ENCODE measurements at regions of chr10 and their contacts with region 1.

Region 1: DNA sequence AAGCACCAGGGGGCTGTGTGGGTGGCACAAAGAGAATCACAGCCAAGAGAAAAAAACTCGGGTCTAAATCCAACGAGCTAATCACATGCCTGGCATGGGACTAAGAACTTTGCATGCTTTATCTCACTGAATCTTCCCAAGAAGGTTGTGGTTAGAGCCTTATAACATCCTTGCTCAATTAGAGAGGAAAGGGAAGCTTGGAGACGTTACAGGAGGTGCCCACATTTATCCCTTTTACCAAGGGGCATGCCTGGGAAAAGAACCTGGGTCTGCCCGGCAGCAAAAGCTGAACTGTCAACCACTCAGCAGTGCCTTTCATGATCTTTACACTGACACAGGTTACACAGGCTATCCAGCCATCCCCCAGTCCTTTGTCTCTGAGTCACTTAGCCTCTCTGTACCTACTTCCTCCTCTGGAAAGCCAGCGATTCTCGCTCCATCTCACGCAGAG is 190.1 kb downstream of the PRPF18 start:
- DNase-seq: no peak
- ATAC-seq: peak; percentile 69
- H3K4me3 ChIP-seq: no peak overlapping the region
- H3K27ac ChIP-seq: peak overlapping the region; percentile 36
- H3K4me1 ChIP-seq: peaks cover 14% of the 10 kb centered on the region
- H3K27me3 ChIP-seq: no peaks in the 10 kb centered on the region
- CTCF ChIP-seq: no peak
- EP300 ChIP-seq: no peak
- POLR2A ChIP-seq: no peak
- RAD21 ChIP-seq: no peak

Region 2: DNA sequence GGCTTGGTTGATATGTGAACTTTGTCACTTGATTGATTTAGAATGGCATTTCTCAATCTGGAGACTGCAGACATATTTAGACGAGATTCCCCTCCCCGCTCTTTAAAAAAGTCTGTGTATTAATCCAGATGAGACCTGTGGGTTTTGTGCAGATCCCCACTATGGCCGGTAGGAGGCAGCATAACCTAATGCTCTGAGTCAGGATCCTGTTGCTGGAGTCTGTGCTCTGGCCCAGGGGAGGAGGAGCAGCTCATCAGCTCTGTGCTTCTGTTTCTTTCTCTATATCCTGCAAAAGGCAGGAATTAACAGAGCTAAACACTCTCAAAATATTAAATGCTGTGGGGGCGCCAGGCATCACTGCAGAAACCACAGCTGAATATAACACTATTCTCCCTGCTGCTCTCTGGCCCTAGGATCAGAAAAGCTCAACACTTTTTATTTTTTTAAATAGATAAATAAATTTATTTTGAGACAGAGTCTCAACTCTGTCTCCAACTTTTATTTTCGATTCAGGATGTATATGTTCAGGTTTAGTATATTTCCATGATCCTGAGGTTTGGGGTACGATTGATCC is 404.9 kb before region 1 on chr10:
- CTCF ChIA-PET with region 1: interaction called, 4 read pairs
- POLR2A ChIA-PET with region 1: interaction called, 4 read pairs
- RAD21 ChIA-PET with region 1: no interaction called
- SMC1A ChIA-PET with region 1: no interaction called
- in situ Hi-C with region 1: loop called (anchors 10 kb)
- intact Hi-C with region 1: loop called (anchors 5 kb)
- DNase-seq: no peak
- ATAC-seq: peak; percentile 99
- H3K4me3 ChIP-seq: no peak overlapping the region
- H3K27ac ChIP-seq: no peak overlapping the region
- H3K4me1 ChIP-seq: no peaks in the 10 kb centered on the region
- H3K27me3 ChIP-seq: no peaks in the 10 kb centered on the region
- CTCF ChIP-seq: peak; percentile 90 to 99 (median 95)
- EP300 ChIP-seq: no peak
- POLR2A ChIP-seq: no peak
- RAD21 ChIP-seq: peak; percentile 97

Region 3: DNA sequence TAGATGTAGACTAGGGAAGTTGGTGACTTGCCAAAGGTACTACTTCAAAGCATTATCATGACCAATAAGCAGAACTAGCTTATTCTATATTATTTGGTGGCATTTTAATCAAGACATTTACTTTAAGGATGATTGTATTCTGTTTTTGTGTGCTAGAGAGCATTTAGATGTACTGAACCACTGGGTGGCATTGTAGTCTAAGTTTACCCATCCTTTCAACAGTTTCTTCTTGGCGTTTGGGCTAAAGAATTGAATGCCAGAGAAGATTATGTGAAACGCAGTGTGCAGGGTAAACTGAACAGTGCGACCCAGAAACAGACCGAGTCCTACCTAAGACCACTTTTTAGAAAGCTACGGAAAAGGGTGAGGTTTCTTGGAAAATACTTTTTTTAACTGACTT is 163.4 kb before region 1 on chr10:
- CTCF ChIA-PET with region 1: interaction called, 5 read pairs
- POLR2A ChIA-PET with region 1: no interaction called
- RAD21 ChIA-PET with region 1: no interaction called
- SMC1A ChIA-PET with region 1: interaction called, 4 read pairs
- in situ Hi-C with region 1: no loop called
- intact Hi-C with region 1: loop called (anchors 1 kb)
- DNase-seq: no peak
- ATAC-seq: peak; percentile 33; the same call in 2 of the 3 replicates
- H3K4me3 ChIP-seq: no peak overlapping the region
- H3K27ac ChIP-seq: no peak overlapping the region
- H3K4me1 ChIP-seq: no peaks in the 10 kb centered on the region
- H3K27me3 ChIP-seq: no peaks in the 10 kb centered on the region
- CTCF ChIP-seq: peak; percentile 7 to 25 (median 23); a peak in 2 of 6 replicates
- EP300 ChIP-seq: no peak
- POLR2A ChIP-seq: no peak
- RAD21 ChIP-seq: peak; percentile 42

Region 4: GRCh38 chr10:13669182-13669865 is 107.6 kb before region 1 on chr10:
- CTCF ChIA-PET with region 1: no interaction called
- POLR2A ChIA-PET with region 1: no interaction called
- RAD21 ChIA-PET with region 1: interaction called, 4 read pairs
- SMC1A ChIA-PET with region 1: no interaction called
- in situ Hi-C with region 1: loop called (anchors 5 kb)
- intact Hi-C with region 1: no loop called
- DNase-seq: no peak
- ATAC-seq: no peak
- H3K4me3 ChIP-seq: no peak overlapping the region
- H3K27ac ChIP-seq: no peak overlapping the region
- H3K4me1 ChIP-seq: no peaks in the 10 kb centered on the region
- H3K27me3 ChIP-seq: no peaks in the 10 kb centered on the region
- CTCF ChIP-seq: no peak
- EP300 ChIP-seq: no peak
- POLR2A ChIP-seq: no peak
- RAD21 ChIP-seq: no peak

Region 5: GRCh38 chr10:13712837-13713581 is 63.9 kb before region 1 on chr10:
- CTCF ChIA-PET with region 1: interaction called, 6 read pairs
- POLR2A ChIA-PET with region 1: interaction called, 3 read pairs
- RAD21 ChIA-PET with region 1: interaction called, 24 read pairs
- SMC1A ChIA-PET with region 1: interaction called, 25 read pairs
- in situ Hi-C with region 1: no loop called
- intact Hi-C with region 1: loop called (anchors 5 kb)
- DNase-seq: peak; percentile 82
- ATAC-seq: peak; percentile 91
- H3K4me3 ChIP-seq: peak overlapping the region; percentile 17; the same call in 1 of the 2 replicates
- H3K27ac ChIP-seq: peak overlapping the region; percentile 97
- H3K4me1 ChIP-seq: peaks cover 41% of the 10 kb centered on the region
- H3K27me3 ChIP-seq: no peaks in the 10 kb centered on the region
- CTCF ChIP-seq: no peak
- EP300 ChIP-seq: peak; percentile 18 to 43; a peak in 2 of 4 replicates
- POLR2A ChIP-seq: peak; percentile 59; the same call in 1 of the 2 replicates
- RAD21 ChIP-seq: no peak

Region 6: DNA sequence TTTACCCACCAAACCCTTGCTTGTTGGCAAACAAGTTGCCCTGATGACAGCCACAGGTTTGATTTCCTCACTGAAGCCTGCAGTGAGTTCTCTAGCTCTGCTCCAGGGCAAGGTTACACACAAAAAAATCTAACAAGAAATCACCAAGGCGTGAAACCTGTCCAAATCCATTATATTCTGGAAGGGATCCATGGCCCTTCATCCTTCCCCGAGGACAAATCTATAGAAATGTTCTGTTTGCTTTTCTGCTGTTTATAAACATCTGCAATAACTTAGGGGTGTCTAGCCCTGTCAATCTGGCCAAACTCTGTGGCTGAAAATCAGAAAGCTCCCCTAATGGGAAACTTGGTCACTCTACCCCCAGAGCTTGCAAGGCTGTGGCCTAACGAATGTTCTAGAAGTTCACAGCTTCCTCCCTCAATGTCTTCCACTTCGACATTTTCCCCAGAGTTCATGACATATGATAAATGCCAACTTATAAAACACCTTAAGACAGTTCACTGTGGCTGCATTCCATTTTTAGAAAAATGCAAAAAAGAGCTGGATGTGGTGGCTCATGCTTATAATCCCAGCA is 25.6 kb before region 1 on chr10:
- CTCF ChIA-PET with region 1: interaction called, 4 read pairs
- POLR2A ChIA-PET with region 1: interaction called, 11 read pairs
- RAD21 ChIA-PET with region 1: interaction called, 18 read pairs
- SMC1A ChIA-PET with region 1: interaction called, 189 read pairs
- in situ Hi-C with region 1: no loop called
- intact Hi-C with region 1: no loop called
- DNase-seq: peak; percentile 60
- ATAC-seq: peak; percentile 69
- H3K4me3 ChIP-seq: no peak overlapping the region
- H3K27ac ChIP-seq: peak overlapping the region; percentile 78
- H3K4me1 ChIP-seq: peaks cover 73% of the 10 kb centered on the region
- H3K27me3 ChIP-seq: no peaks in the 10 kb centered on the region
- CTCF ChIP-seq: no peak
- EP300 ChIP-seq: peak in 1 of 2 experiments; percentile 64; a peak in 2 of 4 replicates
- POLR2A ChIP-seq: no peak
- RAD21 ChIP-seq: no peak

Region 7: GRCh38 chr10:13787015-13787421 is 10.1 kb after region 1 on chr10:
- CTCF ChIA-PET with region 1: interaction called, 10 read pairs
- POLR2A ChIA-PET with region 1: interaction called, 3 read pairs
- RAD21 ChIA-PET with region 1: interaction called, 10 read pairs
- SMC1A ChIA-PET with region 1: interaction called, 12 read pairs
- in situ Hi-C with region 1: no loop called
- intact Hi-C with region 1: no loop called
- DNase-seq: peak; percentile 73
- ATAC-seq: peak; percentile 85
- H3K4me3 ChIP-seq: no peak overlapping the region
- H3K27ac ChIP-seq: peak overlapping the region; percentile 78
- H3K4me1 ChIP-seq: peaks cover 18% of the 10 kb centered on the region
- H3K27me3 ChIP-seq: no peaks in the 10 kb centered on the region
- CTCF ChIP-seq: no peak
- EP300 ChIP-seq: peak in 1 of 2 experiments; percentile 64; a peak in 2 of 4 replicates
- POLR2A ChIP-seq: 0 out of 2 replicates have a peak, but pooled peaks have one; percentile 19
- RAD21 ChIP-seq: no peak